CD4-positive, alpha-beta memory T cell (primary cell): ENCODE measurements at regions of chr1 and their contacts with region 1.

Region 1: DNA sequence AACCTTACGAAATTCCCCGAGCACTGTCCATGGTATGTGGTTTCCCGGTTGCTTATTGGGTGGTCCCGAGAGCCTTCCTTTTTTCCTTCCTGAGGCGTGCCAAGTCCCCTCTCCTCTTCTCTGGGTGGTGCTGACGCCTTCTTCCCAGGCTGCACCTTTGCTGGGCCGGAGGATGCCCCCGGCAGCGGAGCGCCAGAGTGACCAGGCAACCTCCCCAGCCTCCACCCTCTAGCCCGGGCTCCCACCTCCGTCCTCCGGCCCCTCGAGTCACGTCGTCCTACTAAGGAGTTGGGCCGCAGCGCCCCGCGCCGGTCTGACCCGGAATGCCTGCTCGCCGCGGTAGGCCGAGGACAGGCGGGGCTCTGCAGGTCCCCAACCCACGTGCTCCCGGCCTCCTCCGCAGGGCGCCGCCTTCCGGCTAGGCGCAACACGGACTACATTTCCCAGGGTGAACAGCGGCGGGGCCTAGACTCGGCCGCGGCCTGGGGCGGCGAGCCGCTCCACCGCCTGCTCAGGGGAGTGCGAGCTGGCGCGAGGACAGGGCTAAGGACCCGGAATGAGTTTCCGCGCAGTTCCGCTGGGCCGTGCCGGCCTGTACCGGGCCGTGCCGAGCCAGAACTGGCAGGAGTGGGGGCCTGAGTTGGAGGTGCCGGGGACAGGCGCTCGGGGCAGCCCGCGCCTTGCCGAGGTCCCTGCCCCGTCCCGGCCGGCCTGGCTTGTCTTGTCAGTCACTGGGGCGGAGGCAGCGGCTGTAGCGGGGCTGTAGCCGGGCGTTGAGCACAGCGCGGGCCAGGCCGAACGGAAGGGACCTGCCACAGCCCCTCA is at the start of gene IPO13:
- DNase-seq: peak; percentile 94 to 99 (median 96)
- H3K4me3 ChIP-seq: peak within 1 kb of the TSS; percentile 87 to 93
- H3K4me3 Mint-ChIP-seq: peak within 1 kb of the TSS; percentile 91 to 95 (median 93)
- H3K27ac ChIP-seq: peak within 1 kb of the TSS; percentile 93
- H3K27ac Mint-ChIP-seq: peak within 1 kb of the TSS; percentile 90 to 97 (median 96)
- H3K4me1 ChIP-seq: peaks cover 29% of the 10 kb centered on the region
- H3K4me1 Mint-ChIP-seq: peaks cover 29 to 71% (median 44%) of the 10 kb centered on the region in 4 donors
- H3K27me3 ChIP-seq: no peaks in the 10 kb centered on the region
- H3K27me3 Mint-ChIP-seq: no peaks in the 10 kb centered on the region
- total RNA-seq, gene IPO13: 18.5 to 20.0 TPM

Region 2: DNA sequence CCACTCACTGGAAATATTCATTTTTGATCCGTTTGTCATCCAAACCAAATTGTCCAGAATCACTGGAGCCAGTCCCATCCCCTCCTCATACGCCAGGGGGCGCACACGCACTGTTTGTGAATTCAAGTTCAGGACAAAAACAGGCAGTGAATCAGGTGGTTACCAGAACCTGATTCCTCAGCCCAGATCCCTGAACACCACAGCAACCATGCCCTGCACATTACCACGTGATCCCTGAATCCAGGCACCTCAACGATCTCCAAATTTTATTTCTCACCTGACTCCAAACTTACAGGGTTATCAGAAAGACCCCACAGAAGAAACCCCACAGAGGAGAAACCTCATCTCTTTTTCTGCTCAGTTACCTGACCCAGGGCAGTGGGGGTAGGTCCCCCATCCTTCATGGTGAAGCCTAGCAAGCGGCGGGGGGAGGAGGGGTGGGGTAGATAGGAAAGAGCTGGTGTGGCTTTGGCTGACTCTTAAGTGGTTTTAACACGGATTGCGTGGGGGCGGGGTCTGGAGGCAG is 417.2 kb before region 1 on chr1:
- CTCF ChIA-PET with region 1: no interaction called
- POLR2A ChIA-PET with region 1: no interaction called
- intact Hi-C with region 1: loop called (anchors 5 kb)
- DNase-seq: peak; percentile 70 to 76 (median 73)
- H3K4me3 ChIP-seq: no peak overlapping the region
- H3K4me3 Mint-ChIP-seq: peak overlapping the region in 7 of 8 donors; percentile 19 to 84 (median 51)
- H3K27ac ChIP-seq: no peak overlapping the region
- H3K27ac Mint-ChIP-seq: peak overlapping the region in 1 of 7 donors; percentile 74
- H3K4me1 ChIP-seq: peaks cover 21% of the 10 kb centered on the region
- H3K4me1 Mint-ChIP-seq: peaks cover 15 to 31% (median 19%) of the 10 kb centered on the region in 4 donors
- H3K27me3 ChIP-seq: peaks cover 13% of the 10 kb centered on the region
- H3K27me3 Mint-ChIP-seq: peaks cover 39 to 63% of the 10 kb centered on the region in 2 donors

Region 3: GRCh38 chr1:43706598-43707495 is 239.6 kb before region 1 on chr1:
- CTCF ChIA-PET with region 1: no interaction called
- POLR2A ChIA-PET with region 1: interaction called, 3 read pairs
- intact Hi-C with region 1: loop called (anchors 1 kb)
- DNase-seq: peak; percentile 87 to 91 (median 89)
- H3K4me3 ChIP-seq: peak overlapping the region; percentile 24 to 79
- H3K4me3 Mint-ChIP-seq: peak overlapping the region; percentile 85 to 94 (median 90)
- H3K27ac ChIP-seq: peak overlapping the region; percentile 55
- H3K27ac Mint-ChIP-seq: peak overlapping the region; percentile 38 to 79 (median 77)
- H3K4me1 ChIP-seq: peaks cover 16% of the 10 kb centered on the region
- H3K4me1 Mint-ChIP-seq: peaks cover 13 to 32% (median 24%) of the 10 kb centered on the region in 4 donors
- H3K27me3 ChIP-seq: no peaks in the 10 kb centered on the region
- H3K27me3 Mint-ChIP-seq: no peaks in the 10 kb centered on the region

Region 4: DNA sequence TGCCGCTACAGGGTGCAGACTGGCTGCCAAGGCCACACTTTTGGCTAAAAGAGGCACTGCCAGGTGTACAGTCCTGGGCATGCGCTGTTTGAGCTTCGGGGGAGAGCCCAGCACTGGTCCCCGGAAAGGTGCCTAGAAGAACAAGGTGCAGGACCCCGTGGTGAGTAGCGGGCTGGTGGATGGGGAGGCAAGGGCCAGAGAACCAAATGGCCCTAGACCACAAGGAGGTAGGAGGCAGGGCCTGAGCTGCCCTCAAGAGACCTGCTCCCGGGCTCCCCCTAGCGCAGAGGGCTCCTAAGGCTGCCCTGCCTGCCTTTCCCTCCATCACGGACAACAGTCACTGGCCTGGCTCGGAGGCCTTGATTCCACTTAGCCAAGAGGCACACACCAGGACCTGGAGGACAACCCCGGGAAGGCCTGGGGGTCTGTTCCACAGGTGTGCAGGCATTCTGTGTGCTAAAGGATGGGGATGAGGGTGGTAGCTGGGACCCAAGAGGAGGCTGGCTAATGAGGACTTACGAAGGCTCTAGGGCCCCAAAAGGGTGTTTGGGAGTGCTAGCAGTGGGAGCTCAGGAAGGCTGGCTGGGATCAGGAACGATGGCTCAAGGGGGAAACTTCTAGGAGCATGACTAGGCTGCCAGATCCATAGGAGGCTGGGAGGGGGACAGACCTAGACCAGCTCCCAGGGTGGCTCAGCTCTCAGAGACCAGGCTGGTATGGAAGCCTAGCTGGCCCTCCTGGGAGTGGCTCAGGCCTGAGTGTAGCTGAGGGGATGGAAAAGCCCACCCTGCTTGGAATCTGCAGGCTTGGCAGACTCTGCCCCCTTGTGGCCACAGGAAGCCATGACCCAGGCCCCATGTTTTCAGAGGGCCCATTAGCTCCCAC is 12.1 kb before region 1 on chr1:
- CTCF ChIA-PET with region 1: interaction called, 83 read pairs
- POLR2A ChIA-PET with region 1: interaction called, 4 read pairs
- intact Hi-C with region 1: no loop called
- DNase-seq: peak in 4 of 5 donors; percentile 23 to 35 (median 32)
- H3K4me3 ChIP-seq: no peak overlapping the region
- H3K4me3 Mint-ChIP-seq: peak overlapping the region in 4 of 8 donors; percentile 0 to 56 (median 34)
- H3K27ac ChIP-seq: no peak overlapping the region
- H3K27ac Mint-ChIP-seq: peak overlapping the region in 2 of 7 donors; percentile 43 to 56
- H3K4me1 ChIP-seq: peaks cover 8% of the 10 kb centered on the region
- H3K4me1 Mint-ChIP-seq: peaks cover 3 to 25% (median 4%) of the 10 kb centered on the region in 4 donors
- H3K27me3 ChIP-seq: peaks cover 23% of the 10 kb centered on the region
- H3K27me3 Mint-ChIP-seq: peaks cover 16 to 21% of the 10 kb centered on the region in 2 donors

Region 5: GRCh38 chr1:43991476-43992231 is 45.2 kb after region 1 on chr1 and contains the start of gene CCDC24:
- CTCF ChIA-PET with region 1: interaction called, 5 read pairs
- POLR2A ChIA-PET with region 1: interaction called, 7 read pairs
- intact Hi-C with region 1: loop called (anchors 1 kb)
- DNase-seq: peak; percentile 62 to 81 (median 69)
- H3K4me3 ChIP-seq: peak within 1 kb of the TSS; percentile 46 to 74
- H3K4me3 Mint-ChIP-seq: peak within 1 kb of the TSS; percentile 92 to 98 (median 94)
- H3K27ac ChIP-seq: peak within 1 kb of the TSS; percentile 70
- H3K27ac Mint-ChIP-seq: peak within 1 kb of the TSS; percentile 71 to 95 (median 93)
- H3K4me1 ChIP-seq: peaks cover 14% of the 10 kb centered on the region
- H3K4me1 Mint-ChIP-seq: peaks cover 5 to 21% (median 14%) of the 10 kb centered on the region in 4 donors
- H3K27me3 ChIP-seq: no peaks in the 10 kb centered on the region
- H3K27me3 Mint-ChIP-seq: no peaks in the 10 kb centered on the region
- total RNA-seq, gene CCDC24: 1.5 to 1.9 TPM

Region 6: DNA sequence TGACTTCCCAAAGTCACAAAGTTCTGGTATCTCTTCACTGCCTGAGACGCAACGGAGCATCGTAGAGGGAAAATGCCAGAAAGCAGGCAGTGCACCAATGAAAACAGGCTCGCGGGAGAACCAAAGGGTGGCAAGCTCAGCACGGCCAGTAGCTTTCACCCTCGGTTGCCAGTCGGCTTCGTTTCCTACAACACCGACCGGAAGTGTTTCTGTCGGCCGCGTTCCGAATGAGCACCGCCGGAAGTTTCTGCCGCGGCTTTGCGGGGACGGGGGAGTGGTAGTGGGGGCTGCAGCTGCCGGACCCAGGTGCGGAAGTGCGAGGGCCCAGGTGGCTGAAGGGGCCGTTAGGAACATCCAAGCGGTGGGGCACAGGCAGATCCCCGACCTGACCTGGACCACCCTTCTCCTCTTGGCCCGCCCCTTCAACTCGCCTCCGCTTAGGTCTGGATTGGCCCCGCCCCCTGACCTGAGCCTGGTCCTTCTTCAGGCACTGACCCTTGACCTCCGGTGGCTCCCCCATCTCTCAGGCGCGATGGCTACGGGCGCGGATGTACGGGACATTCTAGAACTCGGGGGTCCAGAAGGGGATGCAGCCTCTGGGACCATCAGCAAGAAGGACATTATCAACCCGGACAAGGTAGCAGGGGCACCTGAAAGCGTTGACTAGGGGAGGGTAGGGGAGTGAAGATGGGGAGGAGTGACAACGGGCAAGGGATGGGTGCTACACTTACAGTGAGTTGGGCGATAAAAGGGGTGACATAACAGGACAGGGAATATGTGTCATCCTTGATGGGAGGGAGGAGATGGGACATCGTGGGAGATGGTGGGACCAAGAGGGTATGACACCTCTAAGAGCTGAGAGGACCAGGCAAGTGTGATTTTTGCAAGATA is 267.0 kb after region 1 on chr1 and contains the start of gene DMAP1:
- CTCF ChIA-PET with region 1: no interaction called
- POLR2A ChIA-PET with region 1: no interaction called
- intact Hi-C with region 1: loop called (anchors 1 kb)
- DNase-seq: peak; percentile 82 to 87 (median 85)
- H3K4me3 ChIP-seq: peak within 1 kb of the TSS; percentile 92 to 99
- H3K4me3 Mint-ChIP-seq: peak within 1 kb of the TSS; percentile 92 to 98 (median 95)
- H3K27ac ChIP-seq: peak within 1 kb of the TSS; percentile 80
- H3K27ac Mint-ChIP-seq: peak within 1 kb of the TSS; percentile 94 to 98 (median 97)
- H3K4me1 ChIP-seq: peaks cover 32% of the 10 kb centered on the region
- H3K4me1 Mint-ChIP-seq: peaks cover 31 to 46% (median 39%) of the 10 kb centered on the region in 4 donors
- H3K27me3 ChIP-seq: no peaks in the 10 kb centered on the region
- H3K27me3 Mint-ChIP-seq: peaks cover 0 to 4% of the 10 kb centered on the region in 2 donors
- total RNA-seq, gene DMAP1: 81.7 to 82.6 TPM

Region 7: DNA sequence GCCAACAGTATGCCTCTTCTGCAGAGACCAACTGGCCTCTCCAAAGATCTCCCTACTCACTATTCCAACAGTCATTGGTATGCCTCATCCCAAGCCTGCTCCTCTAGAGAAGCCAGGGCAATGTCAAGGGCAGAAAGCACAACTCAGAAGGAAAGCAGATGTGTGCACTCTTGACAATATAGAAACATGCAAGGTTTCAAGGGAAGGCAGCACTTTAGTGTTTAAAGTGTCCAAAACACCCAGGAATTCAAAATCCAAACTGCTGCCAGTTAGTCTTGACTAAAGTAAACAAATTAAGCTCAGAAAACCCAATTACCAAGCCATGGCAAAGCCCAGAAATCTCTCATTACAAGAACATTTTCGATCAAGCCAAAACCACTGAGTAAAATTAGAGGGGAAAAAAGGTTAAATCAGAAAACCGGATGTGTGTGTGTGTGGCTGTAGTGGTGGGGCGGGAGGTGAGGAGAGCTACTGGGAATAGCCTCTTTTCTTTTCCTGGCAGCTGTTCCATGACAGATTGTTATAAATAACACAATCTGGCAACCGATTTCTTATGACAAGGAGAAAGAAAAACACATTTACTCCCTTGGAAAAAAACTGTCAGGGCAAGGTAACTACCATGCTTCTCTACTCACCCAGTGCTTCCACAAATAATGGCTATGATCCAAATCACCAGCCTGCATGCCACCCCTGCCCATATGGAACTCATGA is 1000.8 kb after region 1 on chr1:
- CTCF ChIA-PET with region 1: no interaction called
- POLR2A ChIA-PET with region 1: no interaction called
- intact Hi-C with region 1: no loop called
- DNase-seq: no peak
- H3K4me3 ChIP-seq: no peak overlapping the region
- H3K4me3 Mint-ChIP-seq: no peak overlapping the region
- H3K27ac ChIP-seq: no peak overlapping the region
- H3K27ac Mint-ChIP-seq: peak overlapping the region in 2 of 7 donors; percentile 6 to 39
- H3K4me1 ChIP-seq: peaks cover 12% of the 10 kb centered on the region
- H3K4me1 Mint-ChIP-seq: peaks cover 8 to 15% (median 12%) of the 10 kb centered on the region in 4 donors
- H3K27me3 ChIP-seq: no peaks in the 10 kb centered on the region
- H3K27me3 Mint-ChIP-seq: no peaks in the 10 kb centered on the region